ENCODE measurements at regions of chr12 and their contacts with region 1.

Region 1: GRCh38 chr12:29782285-29782870 is 1.4 kb downstream of the TMTC1 start:
- DNase-seq: peak; percentile 21
- H3K4me3 ChIP-seq: peak overlapping the region; percentile 47
- H3K27ac ChIP-seq: no peak overlapping the region
- H3K4me1 ChIP-seq: peaks cover 14% of the 10 kb centered on the region
- H3K27me3 ChIP-seq: peaks cover 68% of the 10 kb centered on the region
- CTCF ChIP-seq: no peak

Region 2: DNA sequence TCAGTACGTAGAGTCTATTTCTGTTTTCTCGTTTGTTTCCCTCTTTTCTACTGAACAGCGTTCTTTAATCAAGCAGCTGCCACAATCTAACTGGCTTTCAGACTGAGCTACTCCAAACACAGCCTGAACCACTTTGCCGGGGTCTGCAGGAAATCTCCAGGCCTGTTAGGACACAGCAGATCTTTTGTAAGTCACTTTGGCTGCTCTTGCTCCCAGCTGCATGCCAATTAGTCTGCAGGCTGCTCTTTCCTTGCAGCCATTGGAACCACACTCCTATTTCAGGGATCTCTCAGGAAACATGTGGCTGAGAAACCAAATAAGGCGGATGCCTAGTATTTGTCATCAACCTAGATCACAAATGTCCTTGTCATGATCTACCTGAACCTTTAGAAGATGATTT is 72.3 kb before region 1 on chr12:
- CTCF ChIA-PET with region 1: no interaction called
- POLR2A ChIA-PET with region 1: no interaction called
- intact Hi-C with region 1: no loop called
- DNase-seq: peak; percentile 76
- H3K4me3 ChIP-seq: no peak overlapping the region
- H3K27ac ChIP-seq: no peak overlapping the region
- H3K4me1 ChIP-seq: peaks cover 14% of the 10 kb centered on the region
- H3K27me3 ChIP-seq: peaks cover 13% of the 10 kb centered on the region
- CTCF ChIP-seq: no peak

Region 3: GRCh38 chr12:30286345-30286926 is 504.1 kb after region 1 on chr12:
- CTCF ChIA-PET with region 1: no interaction called
- POLR2A ChIA-PET with region 1: no interaction called
- intact Hi-C with region 1: loop called (anchors 10 kb)
- DNase-seq: peak; percentile 59
- H3K4me3 ChIP-seq: no peak overlapping the region
- H3K27ac ChIP-seq: no peak overlapping the region
- H3K4me1 ChIP-seq: no peaks in the 10 kb centered on the region
- H3K27me3 ChIP-seq: peaks cover 8% of the 10 kb centered on the region
- CTCF ChIP-seq: peak; percentile 71

Measured in A673 (cell line).